Breast epithelium (tissue), 4 donors: ENCODE measurements at regions of chr1 and their contacts with region 1.

Region 1: DNA sequence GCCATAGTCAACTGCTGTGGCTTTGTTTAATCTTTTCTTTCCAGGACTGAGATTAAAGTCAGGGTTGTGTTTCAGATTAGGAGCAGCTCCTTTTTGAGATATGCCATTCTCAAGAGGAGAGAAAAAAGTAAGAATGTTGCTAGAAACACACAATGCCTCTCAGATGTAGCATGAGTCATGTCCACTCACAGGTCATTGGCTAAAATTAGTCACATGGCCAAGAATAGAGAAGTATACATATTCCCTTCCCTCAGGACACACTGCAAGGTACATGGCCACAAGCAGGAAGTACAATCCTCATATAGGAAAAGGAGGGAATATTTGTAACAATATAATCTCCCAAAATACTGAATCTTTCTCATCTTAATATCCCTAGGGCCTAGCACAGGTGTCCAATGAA is 141.9 kb upstream of the PTBP2 start:
- DNase-seq: no peak
- H3K4me3 ChIP-seq: no peak overlapping the region
- H3K27ac ChIP-seq: no peak overlapping the region
- H3K4me1 ChIP-seq: no peaks in the 10 kb centered on the region
- H3K27me3 ChIP-seq: no peaks in the 10 kb centered on the region
- CTCF ChIP-seq: no peak
- POLR2A ChIP-seq: no peak

Region 2: GRCh38 chr1:96545935-96546656 is 33.5 kb before region 1 on chr1:
- intact Hi-C with region 1: loop called (anchors 2 kb)
- DNase-seq: no peak
- H3K4me3 ChIP-seq: no peak overlapping the region
- H3K27ac ChIP-seq: no peak overlapping the region
- H3K4me1 ChIP-seq: no peaks in the 10 kb centered on the region
- H3K27me3 ChIP-seq: no peaks in the 10 kb centered on the region
- CTCF ChIP-seq: no peak
- POLR2A ChIP-seq: no peak

Region 3: GRCh38 chr1:96634883-96635282 is 55.2 kb after region 1 on chr1:
- intact Hi-C with region 1: no loop called
- DNase-seq: no peak
- H3K4me3 ChIP-seq: no peak overlapping the region
- H3K27ac ChIP-seq: no peak overlapping the region
- H3K4me1 ChIP-seq: no peaks in the 10 kb centered on the region
- H3K27me3 ChIP-seq: no peaks in the 10 kb centered on the region
- CTCF ChIP-seq: no peak
- POLR2A ChIP-seq: no peak